Activated CD4-positive, alpha-beta memory T cell treated with anti-CD3 and anti-CD28 coated beads for 36 hours (primary cell): ENCODE measurements at regions of chr7 and their contacts with region 1.

Region 1: DNA sequence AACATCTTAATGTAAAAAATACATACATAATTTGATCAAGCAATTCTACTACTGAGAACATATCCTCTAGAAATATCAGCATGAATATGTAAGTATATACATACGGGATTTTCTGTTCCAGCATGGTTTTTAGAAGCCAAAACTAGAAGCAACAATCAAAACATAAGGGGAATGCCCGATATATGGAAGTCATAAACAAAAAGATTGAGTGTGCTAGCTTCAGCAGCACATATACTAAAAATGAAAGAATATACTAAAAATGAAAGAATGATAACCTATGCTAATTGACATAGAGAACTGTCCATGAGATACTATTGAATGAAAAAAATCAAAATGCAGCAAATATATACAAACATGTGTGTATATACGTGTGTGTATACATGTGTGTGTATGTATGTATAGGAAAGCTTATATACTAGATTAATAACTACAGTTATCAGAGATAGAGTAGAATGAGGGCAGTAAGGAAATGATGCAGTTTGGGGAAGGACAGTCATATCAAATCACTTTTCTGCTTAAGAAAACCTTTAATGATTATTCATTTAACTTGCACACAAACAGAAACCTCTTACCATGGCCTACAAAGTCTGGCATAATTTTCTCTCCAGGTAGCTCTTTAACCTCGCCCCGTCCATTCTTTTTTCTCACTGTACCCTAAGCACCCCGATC is 72.9 kb downstream of the NPY start:
- DNase-seq: no peak
- H3K4me3 Mint-ChIP-seq: no peak overlapping the region
- H3K27ac Mint-ChIP-seq: no peak overlapping the region
- H3K4me1 Mint-ChIP-seq: peaks cover 11% of the 10 kb centered on the region
- H3K27me3 Mint-ChIP-seq: peaks cover 19% of the 10 kb centered on the region

Region 2: DNA sequence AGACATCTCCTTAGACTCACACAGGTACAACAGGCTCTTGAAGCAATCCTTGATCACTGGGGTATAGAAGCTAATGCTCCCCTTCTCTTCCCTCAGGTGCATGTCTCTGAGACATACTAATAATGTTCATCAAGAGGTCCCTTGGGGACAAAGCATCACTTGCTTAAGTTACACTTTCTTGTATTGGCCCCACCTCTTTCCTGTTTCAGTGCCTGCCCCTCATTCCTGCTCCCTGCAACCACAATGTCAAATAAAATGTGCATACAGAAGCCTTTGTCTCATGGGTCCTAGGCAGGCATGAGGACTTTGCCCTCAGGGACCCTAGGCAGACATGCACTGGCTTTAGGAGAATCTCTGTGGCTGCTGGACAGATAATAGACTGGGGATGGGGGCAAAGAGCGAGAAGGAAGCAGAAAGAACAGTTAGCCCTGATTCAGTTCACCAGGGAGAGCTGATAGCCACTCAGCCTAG is 247.9 kb before region 1 on chr7:
- CTCF ChIA-PET with region 1: no interaction called
- POLR2A ChIA-PET with region 1: no interaction called
- intact Hi-C with region 1: no loop called
- DNase-seq: no peak
- H3K4me3 Mint-ChIP-seq: no peak overlapping the region
- H3K27ac Mint-ChIP-seq: no peak overlapping the region
- H3K4me1 Mint-ChIP-seq: no peaks in the 10 kb centered on the region
- H3K27me3 Mint-ChIP-seq: peaks cover 8% of the 10 kb centered on the region

Region 3: GRCh38 chr7:24325708-24326107 is 31.1 kb before region 1 on chr7:
- CTCF ChIA-PET with region 1: no interaction called
- POLR2A ChIA-PET with region 1: no interaction called
- intact Hi-C with region 1: no loop called
- DNase-seq: no peak
- H3K4me3 Mint-ChIP-seq: no peak overlapping the region
- H3K27ac Mint-ChIP-seq: no peak overlapping the region
- H3K4me1 Mint-ChIP-seq: no peaks in the 10 kb centered on the region
- H3K27me3 Mint-ChIP-seq: peaks cover 3% of the 10 kb centered on the region

Region 4: DNA sequence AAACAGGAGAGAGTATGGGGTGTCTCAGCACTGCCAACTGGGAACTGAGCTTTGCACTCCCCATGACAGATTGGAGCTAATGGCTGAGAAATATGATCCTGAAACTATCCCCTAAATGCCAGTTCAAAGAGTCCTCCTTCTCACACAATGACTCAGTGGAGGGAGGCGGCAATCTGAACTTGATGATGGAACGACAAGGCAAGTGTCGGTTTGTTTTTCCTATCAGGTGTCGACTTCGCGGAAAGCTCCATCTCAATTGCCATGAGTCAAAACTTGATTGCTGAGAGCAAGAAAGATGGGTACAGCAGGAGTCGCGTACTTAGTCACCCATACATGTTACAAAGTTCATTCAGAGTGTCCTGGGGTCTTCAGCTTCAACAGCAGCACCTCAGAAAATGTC is 20.4 kb before region 1 on chr7:
- CTCF ChIA-PET with region 1: interaction called, 6 read pairs
- POLR2A ChIA-PET with region 1: interaction called, 4 read pairs
- intact Hi-C with region 1: loop called (anchors 1 kb)
- DNase-seq: peak; percentile 74
- H3K4me3 Mint-ChIP-seq: no peak overlapping the region
- H3K27ac Mint-ChIP-seq: no peak overlapping the region
- H3K4me1 Mint-ChIP-seq: peaks cover 6% of the 10 kb centered on the region
- H3K27me3 Mint-ChIP-seq: peaks cover 27% of the 10 kb centered on the region